ENCODE measurements at regions of chr9 and their contacts with region 1.

Region 1: GRCh38 chr9:133347985-133348717 is at the starts of genes MED22 and RPL7A:
- DNase-seq: peak; percentile 97
- ATAC-seq: peak; percentile 90
- total RNA-seq, gene MED22: 20.8 TPM
- total RNA-seq, gene RPL7A: 977 TPM

Region 2: DNA sequence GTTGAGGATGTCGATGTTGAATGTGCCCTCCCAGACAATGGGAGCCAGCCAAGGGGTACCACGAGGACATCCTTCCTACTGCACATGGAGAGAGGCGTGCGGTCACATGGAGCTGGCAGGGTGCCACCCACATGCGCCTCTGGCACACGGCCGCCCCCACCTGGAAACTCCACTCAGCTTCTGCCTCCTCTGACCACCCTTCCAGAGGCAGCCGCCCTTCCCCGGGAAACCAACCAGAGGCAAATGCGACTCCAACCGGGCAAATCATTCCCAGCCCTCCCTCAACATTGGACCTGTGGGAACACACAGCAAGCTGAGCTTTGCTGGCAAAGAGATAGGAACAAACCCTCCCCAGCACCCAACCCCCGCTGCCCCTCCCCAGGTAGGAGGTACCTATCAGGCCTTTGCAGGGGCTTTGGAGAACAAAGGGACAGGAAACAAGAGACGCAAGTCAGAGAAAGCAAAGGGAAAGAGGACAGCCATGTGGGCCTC is 90.6 kb before region 1 on chr9:
- intact Hi-C with region 1: no loop called
- DNase-seq: no peak
- ATAC-seq: no peak

Region 3: DNA sequence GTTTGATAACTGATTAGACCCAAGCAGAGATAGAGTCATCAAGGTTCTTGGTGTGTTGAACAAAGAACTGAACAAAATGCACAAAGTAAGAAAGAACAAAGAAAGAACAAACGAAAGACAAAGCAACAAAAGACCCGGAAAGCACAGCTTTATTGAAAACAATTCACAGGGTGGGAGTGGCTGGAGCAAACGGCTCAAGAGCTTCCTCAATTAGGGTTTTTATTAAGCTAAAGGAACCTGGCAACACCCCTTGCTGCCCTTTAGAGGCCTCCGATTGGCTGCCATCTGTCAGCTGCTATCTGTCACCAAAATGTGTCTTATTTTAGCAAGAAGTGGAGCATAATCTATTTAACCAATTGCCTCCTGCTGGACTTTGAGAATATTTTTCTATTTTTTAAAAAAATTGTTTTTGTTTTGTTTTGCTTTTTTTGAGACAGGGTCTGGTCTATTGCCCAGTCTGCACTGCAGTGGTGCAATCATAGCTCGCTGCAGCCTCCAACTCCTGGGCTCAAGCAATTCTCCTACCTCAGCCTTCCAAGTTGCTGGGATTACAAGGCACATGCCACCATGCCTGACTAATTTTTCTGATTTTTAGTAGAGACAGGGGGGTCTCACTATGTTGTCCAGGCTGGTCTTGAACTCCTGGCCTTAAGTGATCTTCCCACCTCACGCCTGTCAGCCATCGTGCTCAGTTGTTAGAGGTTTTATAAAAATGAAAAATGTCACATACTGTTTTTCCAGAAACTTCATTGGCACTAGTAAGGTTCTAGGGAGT is 65.5 kb before region 1 on chr9:
- intact Hi-C with region 1: no loop called
- DNase-seq: no peak
- ATAC-seq: no peak

Region 4: GRCh38 chr9:133335878-133336811 is 12.0 kb before region 1 on chr9 and contains the start of gene SURF6:
- intact Hi-C with region 1: loop called (anchors 1 kb)
- DNase-seq: peak; percentile 97
- ATAC-seq: peak; percentile 94
- total RNA-seq, gene SURF6: 13.4 TPM

Region 5: GRCh38 chr9:133470427-133470924 is 122.3 kb after region 1 on chr9:
- intact Hi-C with region 1: no loop called
- DNase-seq: no peak
- ATAC-seq: no peak

Region 6: GRCh38 chr9:133534346-133535291 is 186.5 kb after region 1 on chr9 and contains the start of gene ADAMTSL2:
- intact Hi-C with region 1: no loop called
- DNase-seq: peak; percentile 89
- ATAC-seq: peak; percentile 81
- total RNA-seq, gene ADAMTSL2: 9.5 TPM

Measured in Right ventricle myocardium inferior (tissue), 1 donor.